ENCODE measurements at regions of chr5 and their contacts with region 1.

Region 1: GRCh38 chr5:54517174-54518092 is at the start of gene SNX18:
- DNase-seq: peak; percentile 87 to 94 (median 92)
- ATAC-seq: peak; percentile 98
- H3K4me3 ChIP-seq: peak within 1 kb of the TSS; percentile 62
- H3K4me3 Mint-ChIP-seq: peak within 1 kb of the TSS; percentile 62 to 94 (median 91)
- H3K27ac ChIP-seq: peak within 1 kb of the TSS; percentile 83
- H3K27ac Mint-ChIP-seq: peak within 1 kb of the TSS in 8 of 9 donors; percentile 52 to 87 (median 69)
- H3K4me1 ChIP-seq: peaks cover 18 to 37% of the 10 kb centered on the region in 2 donors
- H3K4me1 Mint-ChIP-seq: peaks cover 26 to 48% (median 41%) of the 10 kb centered on the region in 7 donors
- H3K27me3 ChIP-seq: no peaks in the 10 kb centered on the region
- H3K27me3 Mint-ChIP-seq: peaks cover 0 to 29% (median 0%) of the 10 kb centered on the region in 5 donors
- total RNA-seq, gene SNX18: 14.3 to 40.9 (median 28.1) TPM

Region 2: DNA sequence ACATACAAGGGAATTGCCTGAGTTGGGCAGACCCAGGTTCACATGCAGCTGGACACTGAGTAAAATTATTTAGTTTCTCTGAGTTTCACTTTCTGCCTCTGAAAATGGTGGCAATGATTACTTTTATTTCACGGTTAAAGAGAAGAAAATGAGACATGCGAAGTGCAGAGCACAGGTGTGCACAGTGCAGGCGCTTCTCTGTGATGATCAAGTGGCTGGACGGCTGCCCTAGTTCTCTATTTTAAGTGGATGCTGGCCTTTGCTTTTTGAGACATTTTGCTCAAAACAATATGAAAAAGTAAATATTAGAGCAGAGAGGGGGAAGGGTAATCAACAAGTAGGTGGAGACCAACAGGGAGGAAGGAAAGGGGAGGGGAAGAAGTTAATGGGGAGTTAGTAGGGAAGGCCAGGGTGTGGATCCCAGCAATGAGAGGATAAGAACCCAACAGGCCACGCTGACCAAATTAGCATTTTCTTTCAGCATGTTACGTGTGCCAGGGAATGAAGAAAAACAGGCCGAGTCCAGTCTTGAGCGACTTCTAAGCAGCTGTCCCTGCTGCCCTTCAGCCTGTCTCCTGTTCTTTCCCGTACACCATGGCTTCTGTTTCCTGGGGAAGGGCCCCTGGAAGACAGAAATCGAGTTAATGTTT is 16.2 kb after region 1 on chr5:
- CTCF ChIA-PET with region 1: interaction called, 8 read pairs
- POLR2A ChIA-PET with region 1: interaction called, 3 read pairs
- intact Hi-C with region 1: loop called in 1 of 2 experiments (anchors 2 kb)
- DNase-seq: no peak
- ATAC-seq: no peak
- H3K4me3 ChIP-seq: no peak overlapping the region
- H3K4me3 Mint-ChIP-seq: peak overlapping the region in 2 of 10 donors; percentile 17 to 19
- H3K27ac ChIP-seq: no peak overlapping the region
- H3K27ac Mint-ChIP-seq: peak overlapping the region in 3 of 9 donors; percentile 0 to 54 (median 39)
- H3K4me1 ChIP-seq: peaks cover 3 to 15% of the 10 kb centered on the region in 2 donors
- H3K4me1 Mint-ChIP-seq: peaks cover 35 to 66% (median 53%) of the 10 kb centered on the region in 7 donors
- H3K27me3 ChIP-seq: no peaks in the 10 kb centered on the region
- H3K27me3 Mint-ChIP-seq: no peaks in the 10 kb centered on the region

Region 3: GRCh38 chr5:54743997-54744788 is 226.8 kb after region 1 on chr5:
- CTCF ChIA-PET with region 1: interaction called, 3 read pairs
- POLR2A ChIA-PET with region 1: interaction called, 6 read pairs
- intact Hi-C with region 1: loop called (anchors 1 to 2 kb)
- DNase-seq: peak in 8 of 9 donors; percentile 38 to 71 (median 52)
- ATAC-seq: peak; percentile 90
- H3K4me3 ChIP-seq: peak overlapping the region; percentile 9
- H3K4me3 Mint-ChIP-seq: peak overlapping the region in 9 of 10 donors; percentile 3 to 77 (median 35)
- H3K27ac ChIP-seq: no peak overlapping the region
- H3K27ac Mint-ChIP-seq: peak overlapping the region in 8 of 9 donors; percentile 25 to 82 (median 36)
- H3K4me1 ChIP-seq: peaks cover 11 to 35% of the 10 kb centered on the region in 2 donors
- H3K4me1 Mint-ChIP-seq: peaks cover 16 to 57% (median 20%) of the 10 kb centered on the region in 7 donors
- H3K27me3 ChIP-seq: no peaks in the 10 kb centered on the region
- H3K27me3 Mint-ChIP-seq: peaks cover 0 to 6% (median 4%) of the 10 kb centered on the region in 5 donors

Region 4: DNA sequence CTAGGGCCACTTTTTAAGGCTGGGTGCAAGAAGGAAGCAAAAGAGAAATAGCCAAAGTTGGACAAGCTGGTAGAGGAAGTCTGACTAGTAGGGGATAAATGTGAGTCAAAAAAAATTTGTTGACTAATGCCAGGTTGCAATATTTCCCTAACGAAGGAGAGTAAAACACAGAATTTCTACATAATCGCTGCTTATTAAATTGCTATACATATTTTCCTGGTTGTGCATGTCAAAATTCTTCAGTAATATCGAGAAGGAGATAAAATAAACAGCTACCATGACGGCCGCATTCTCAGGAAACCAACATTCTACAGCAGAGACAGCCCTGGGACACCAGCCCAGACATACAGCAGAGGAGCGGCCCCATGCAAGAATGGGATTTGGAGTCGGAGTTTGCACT is 319.7 kb after region 1 on chr5:
- CTCF ChIA-PET with region 1: interaction called, 103 read pairs
- POLR2A ChIA-PET with region 1: no interaction called
- intact Hi-C with region 1: no loop called
- DNase-seq: no peak
- ATAC-seq: peak; percentile 54
- H3K4me3 ChIP-seq: no peak overlapping the region
- H3K4me3 Mint-ChIP-seq: no peak overlapping the region
- H3K27ac ChIP-seq: no peak overlapping the region
- H3K27ac Mint-ChIP-seq: no peak overlapping the region
- H3K4me1 ChIP-seq: peaks cover 0 to 6% of the 10 kb centered on the region in 2 donors
- H3K4me1 Mint-ChIP-seq: peaks cover 0 to 20% (median 15%) of the 10 kb centered on the region in 7 donors
- H3K27me3 ChIP-seq: no peaks in the 10 kb centered on the region
- H3K27me3 Mint-ChIP-seq: peaks cover 0 to 20% (median 0%) of the 10 kb centered on the region in 5 donors

Region 5: DNA sequence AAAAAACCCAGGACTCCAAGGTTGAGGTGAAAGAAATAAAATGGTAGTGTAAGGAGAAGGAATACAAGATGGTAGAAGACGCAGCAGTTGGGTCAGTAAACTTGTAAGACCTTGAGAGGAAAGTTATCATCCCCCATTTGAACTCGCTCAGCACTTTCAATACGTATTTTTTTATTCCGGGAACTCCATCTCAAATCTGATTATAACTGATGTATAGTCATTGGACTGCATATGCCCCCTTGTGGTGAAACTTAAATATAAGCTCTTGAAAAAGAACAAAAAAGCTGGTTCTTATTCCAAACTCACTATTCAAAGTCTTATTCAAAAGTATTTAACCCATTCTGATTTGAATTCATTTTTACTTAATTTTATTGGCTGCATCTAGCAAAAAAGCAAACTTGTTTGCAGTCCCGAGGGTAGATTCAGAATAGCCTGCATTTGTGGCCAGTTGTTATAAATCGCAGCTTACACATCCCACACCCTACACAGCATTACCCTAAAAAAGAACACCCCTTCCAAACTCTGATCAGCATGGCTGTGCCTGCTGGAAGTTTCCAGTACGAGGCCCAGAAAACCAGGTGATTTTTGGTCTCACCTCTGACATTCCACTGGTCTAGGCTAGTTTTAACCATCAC is 350.0 kb after region 1 on chr5:
- CTCF ChIA-PET with region 1: interaction called, 59 read pairs
- POLR2A ChIA-PET with region 1: interaction called, 19 read pairs
- intact Hi-C with region 1: loop called (anchors 1 kb)
- DNase-seq: peak in 7 of 9 donors; percentile 38 to 66 (median 59)
- ATAC-seq: peak; percentile 83
- H3K4me3 ChIP-seq: peak overlapping the region; percentile 33
- H3K4me3 Mint-ChIP-seq: peak overlapping the region; percentile 2 to 80 (median 52)
- H3K27ac ChIP-seq: no peak overlapping the region
- H3K27ac Mint-ChIP-seq: peak overlapping the region in 4 of 9 donors; percentile 44 to 60 (median 52)
- H3K4me1 ChIP-seq: no peaks in the 10 kb centered on the region
- H3K4me1 Mint-ChIP-seq: peaks cover 0 to 20% (median 9%) of the 10 kb centered on the region in 7 donors
- H3K27me3 ChIP-seq: no peaks in the 10 kb centered on the region
- H3K27me3 Mint-ChIP-seq: peaks cover 0 to 69% (median 11%) of the 10 kb centered on the region in 5 donors

Region 6: DNA sequence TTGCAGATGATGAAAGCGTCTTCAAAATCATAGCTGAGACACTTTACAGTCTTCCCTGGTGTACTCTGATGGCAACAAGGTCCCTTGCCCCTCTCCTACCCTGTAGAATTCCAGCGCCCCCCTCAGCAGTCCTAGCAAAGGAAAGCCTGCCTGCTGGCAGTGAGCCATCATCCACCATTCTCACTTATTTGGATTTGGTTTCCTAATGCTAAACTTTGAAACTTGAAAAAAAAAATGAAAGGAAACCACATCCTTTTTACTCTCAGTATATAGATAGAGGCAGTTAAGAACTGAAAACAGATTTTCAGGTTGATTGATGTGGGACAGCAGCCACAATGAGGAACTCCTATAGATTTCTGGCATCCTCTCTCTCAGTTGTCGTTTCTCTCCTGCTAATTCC is 584.9 kb after region 1 on chr5 and contains the start of gene GZMA:
- CTCF ChIA-PET with region 1: no interaction called
- POLR2A ChIA-PET with region 1: no interaction called
- intact Hi-C with region 1: loop called in 1 of 2 experiments (anchors 5 kb)
- DNase-seq: peak in 8 of 9 donors; percentile 47 to 86 (median 80)
- ATAC-seq: peak; percentile 87
- H3K4me3 ChIP-seq: peak within 1 kb of the TSS; percentile 66
- H3K4me3 Mint-ChIP-seq: peak within 1 kb of the TSS; percentile 83 to 93 (median 89)
- H3K27ac ChIP-seq: peak within 1 kb of the TSS; percentile 21
- H3K27ac Mint-ChIP-seq: peak within 1 kb of the TSS; percentile 77 to 93 (median 90)
- H3K4me1 ChIP-seq: peaks cover 42 to 47% of the 10 kb centered on the region in 2 donors
- H3K4me1 Mint-ChIP-seq: peaks cover 44 to 92% (median 80%) of the 10 kb centered on the region in 7 donors
- H3K27me3 ChIP-seq: no peaks in the 10 kb centered on the region
- H3K27me3 Mint-ChIP-seq: no peaks in the 10 kb centered on the region
- total RNA-seq, gene GZMA: 2.0 to 1,076 (median 10.9) TPM

Region 7: GRCh38 chr5:55307383-55308253 is 790.2 kb after region 1 on chr5 and contains the starts of genes DHX29 and MTREX:
- CTCF ChIA-PET with region 1: no interaction called
- POLR2A ChIA-PET with region 1: no interaction called
- intact Hi-C with region 1: loop called in 1 of 2 experiments (anchors 5 kb)
- DNase-seq: peak; percentile 85 to 93 (median 91)
- ATAC-seq: peak; percentile 94
- H3K4me3 ChIP-seq: peak within 1 kb of the TSS; percentile 97
- H3K4me3 Mint-ChIP-seq: no peak within 1 kb of the TSS
- H3K27ac ChIP-seq: peak within 1 kb of the TSS; percentile 89
- H3K27ac Mint-ChIP-seq: no peak within 1 kb of the TSS
- H3K4me1 ChIP-seq: peaks cover 28 to 33% of the 10 kb centered on the region in 2 donors
- H3K4me1 Mint-ChIP-seq: peaks cover 15 to 34% (median 21%) of the 10 kb centered on the region in 7 donors
- H3K27me3 ChIP-seq: no peaks in the 10 kb centered on the region
- H3K27me3 Mint-ChIP-seq: no peaks in the 10 kb centered on the region
- total RNA-seq, gene DHX29: 12.5 to 19.2 (median 15.9) TPM
- total RNA-seq, gene MTREX: 64.0 to 83.7 (median 66.3) TPM